Dorsolateral prefrontal cortex (tissue), 120 donors: ENCODE measurements at regions of chr6 and their contacts with region 1.

Region 1: DNA sequence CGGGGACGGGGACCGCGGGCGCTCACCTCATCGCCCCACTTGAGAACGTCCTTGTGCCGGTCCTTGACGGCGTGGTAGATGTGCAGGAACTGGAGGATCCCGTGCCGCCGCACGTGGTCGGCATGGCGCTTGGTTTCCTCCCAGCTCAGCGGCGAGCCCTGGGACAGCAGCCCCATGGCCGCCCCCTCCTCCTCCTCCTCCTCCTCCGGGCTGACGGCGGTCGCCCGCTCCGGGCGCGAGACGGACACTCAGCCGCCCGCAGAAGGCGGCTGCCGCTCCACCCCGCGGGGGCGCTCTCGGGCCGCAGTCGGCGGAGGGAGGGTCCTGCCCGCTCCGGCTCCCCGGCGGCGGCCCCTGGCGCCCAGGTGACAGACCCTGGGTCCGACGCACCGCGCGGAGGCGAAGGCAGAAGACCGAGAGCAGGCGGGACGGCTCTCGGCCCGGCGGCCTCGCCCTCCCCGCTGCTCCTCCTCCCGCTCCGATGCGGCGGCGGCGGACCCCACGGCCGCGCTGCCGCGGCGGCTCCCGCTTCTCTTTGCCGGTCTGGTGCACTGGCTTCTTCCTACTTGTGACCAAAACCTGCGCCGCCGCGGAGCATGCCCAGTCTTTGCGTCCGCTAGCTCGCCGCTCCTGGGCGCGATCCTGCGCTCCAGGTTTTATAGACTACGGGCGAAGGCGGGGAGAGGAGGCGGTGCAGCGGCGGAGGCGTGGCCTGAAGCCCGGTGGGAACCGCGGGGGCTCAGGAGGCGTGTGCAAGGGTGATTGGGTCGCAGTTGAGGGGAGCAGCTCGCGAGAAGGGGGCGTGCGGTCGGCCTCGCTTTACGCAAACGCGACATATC is at the start of gene GCLC:
- DNase-seq: peak; percentile 87 to 95 (median 91)
- H3K4me3 ChIP-seq: peak within 1 kb of the TSS; percentile 67 to 100 (median 94)
- H3K27ac ChIP-seq: peak within 1 kb of the TSS; percentile 66 to 99 (median 97)
- H3K27me3 ChIP-seq: no peaks in the 10 kb centered on the region
- CTCF ChIP-seq: peak in 55 of 56 donors; percentile 2 to 92 (median 71)
- total RNA-seq, gene GCLC: 28.3 to 113 (median 64.6) TPM

Region 2: DNA sequence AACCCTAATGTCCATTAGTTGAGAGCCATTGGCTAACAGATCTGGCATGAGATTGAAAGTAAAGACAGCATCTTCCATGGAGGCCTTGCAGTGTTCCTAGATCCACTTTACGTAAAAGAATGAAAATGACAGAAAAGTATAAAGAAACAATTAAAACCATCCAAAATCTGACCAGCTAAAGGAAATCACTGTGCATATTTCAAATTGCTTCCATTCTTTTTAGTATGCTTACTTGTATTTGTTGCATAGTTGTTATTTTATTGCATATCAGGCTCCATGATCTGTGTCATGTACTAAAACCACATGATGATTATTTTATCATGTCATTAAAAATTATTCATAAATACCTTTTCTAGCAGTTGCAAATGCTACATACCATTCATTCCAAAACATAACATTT is 67.7 kb before region 1 on chr6:
- intact Hi-C with region 1: no loop called
- DNase-seq: no peak
- H3K4me3 ChIP-seq: no peak overlapping the region
- H3K27ac ChIP-seq: no peak overlapping the region
- H3K27me3 ChIP-seq: no peaks in the 10 kb centered on the region
- CTCF ChIP-seq: no peak

Region 3: DNA sequence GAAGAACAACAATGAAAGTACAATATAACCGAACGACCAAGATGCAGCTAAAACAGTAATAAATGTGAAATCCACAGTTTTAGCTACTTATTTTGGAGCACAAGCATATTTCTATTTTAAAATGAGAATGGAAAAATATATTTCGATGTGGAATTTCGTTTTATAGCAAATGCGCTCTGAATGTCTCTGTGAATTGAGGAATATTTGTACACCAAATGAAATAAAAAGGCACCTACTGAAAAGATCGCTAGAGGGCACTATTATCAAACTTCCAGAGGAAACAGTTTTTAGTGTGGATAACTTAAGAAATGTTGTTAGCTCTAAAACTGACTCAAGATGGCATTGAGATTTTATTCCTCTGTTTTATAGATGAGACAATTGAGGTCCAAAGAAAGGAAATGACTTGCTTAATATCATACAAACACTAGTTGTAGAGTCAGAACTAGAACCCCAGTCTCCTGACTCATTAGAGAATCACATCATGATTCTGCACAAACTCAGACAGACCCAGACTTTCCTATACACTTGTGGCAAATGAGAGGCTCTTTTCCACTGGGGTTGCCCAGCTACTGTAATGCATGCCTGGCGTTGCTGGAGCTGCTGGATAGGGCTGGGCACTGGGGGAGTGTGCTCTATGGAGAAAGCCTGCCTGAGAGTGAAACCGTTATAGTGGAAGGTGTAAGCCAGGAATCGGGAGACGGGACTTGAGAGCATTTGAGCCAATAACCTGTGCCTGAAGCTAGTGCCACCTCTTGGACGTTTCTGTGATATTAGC is 51.6 kb before region 1 on chr6:
- intact Hi-C with region 1: loop called (anchors 2 kb)
- DNase-seq: no peak
- H3K4me3 ChIP-seq: peak overlapping the region in 54 of 59 donors; percentile 9 to 64 (median 42)
- H3K27ac ChIP-seq: peak overlapping the region in 18 of 59 donors; percentile 8 to 63 (median 31)
- H3K27me3 ChIP-seq: no peaks in the 10 kb centered on the region
- CTCF ChIP-seq: peak; percentile 61 to 95 (median 86)

Region 4: DNA sequence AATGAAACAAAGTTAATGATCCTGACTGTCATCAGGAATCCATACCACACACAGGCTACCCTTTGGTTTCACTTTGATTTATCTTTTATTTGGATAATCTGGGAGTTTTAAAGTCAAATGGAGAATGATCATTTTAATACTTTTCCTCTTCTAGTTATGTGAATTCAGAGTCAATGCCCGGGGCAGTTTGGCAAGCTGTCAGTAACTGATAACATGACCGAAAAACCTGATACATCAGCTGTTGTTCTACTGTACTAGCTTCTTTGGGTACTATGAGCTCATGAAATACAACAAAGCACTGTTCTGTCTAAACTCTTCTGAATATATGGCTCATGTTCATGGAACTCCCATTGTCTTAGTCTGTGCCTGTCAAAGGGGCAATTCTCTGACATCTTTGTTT is 90.6 kb after region 1 on chr6:
- intact Hi-C with region 1: loop called in 1 of 2 experiments (anchors 5 kb)
- DNase-seq: peak in 2 of 10 donors; percentile 50 to 60
- H3K4me3 ChIP-seq: peak overlapping the region in 39 of 59 donors; percentile 1 to 51 (median 26)
- H3K27ac ChIP-seq: peak overlapping the region; percentile 14 to 98 (median 89)
- H3K27me3 ChIP-seq: no peaks in the 10 kb centered on the region
- CTCF ChIP-seq: no peak